K562 (cell line): ENCODE measurements at regions of chr2 and their contacts with region 1.

Region 1: GRCh38 chr2:206800506-206801417 is 35.4 kb downstream of the FASTKD2 start:
- DNase-seq: peak; percentile 26 to 61 (median 28)
- ATAC-seq: peak; percentile 80
- H3K4me3 ChIP-seq: no peak overlapping the region
- H3K27ac ChIP-seq: no peak overlapping the region
- H3K4me1 ChIP-seq: no peaks in the 10 kb centered on the region
- H3K27me3 ChIP-seq: no peaks in the 10 kb centered on the region
- CTCF ChIP-seq: peak; percentile 51 to 72 (median 57)
- EP300 ChIP-seq: no peak
- POLR2A ChIP-seq: no peak
- RAD21 ChIP-seq: peak; percentile 66 to 67

Region 2: GRCh38 chr2:206543073-206543472 is 257.7 kb before region 1 on chr2:
- CTCF ChIA-PET with region 1: no interaction called
- POLR2A ChIA-PET with region 1: no interaction called
- in situ Hi-C with region 1: no loop called
- intact Hi-C with region 1: no loop called
- DNase-seq: no peak
- ATAC-seq: no peak
- H3K4me3 ChIP-seq: no peak overlapping the region
- H3K27ac ChIP-seq: no peak overlapping the region
- H3K4me1 ChIP-seq: no peaks in the 10 kb centered on the region
- H3K27me3 ChIP-seq: no peaks in the 10 kb centered on the region; a peak in 1 of 5 replicates
- CTCF ChIP-seq: no peak
- EP300 ChIP-seq: no peak
- POLR2A ChIP-seq: no peak
- RAD21 ChIP-seq: no peak

Region 3: DNA sequence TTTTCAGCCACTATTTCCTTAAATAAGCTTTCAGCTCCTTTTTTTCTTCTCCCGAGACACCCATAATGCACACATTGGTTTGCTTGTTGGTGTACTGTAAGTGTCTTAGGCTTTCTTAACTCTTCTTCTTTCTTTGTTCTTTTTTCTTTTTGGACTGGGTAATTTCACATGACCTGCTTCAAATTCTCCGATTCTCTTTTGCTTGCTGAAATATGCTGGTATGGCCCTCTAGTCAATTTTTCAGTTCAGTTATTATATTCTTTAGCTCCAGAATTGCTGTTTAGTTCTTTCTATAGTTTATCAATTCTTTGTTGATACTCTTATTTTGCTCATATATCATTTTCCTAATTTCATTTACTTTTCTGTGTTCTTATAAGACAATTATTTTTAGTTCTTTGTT is 20.1 kb before region 1 on chr2:
- CTCF ChIA-PET with region 1: no interaction called
- POLR2A ChIA-PET with region 1: no interaction called
- in situ Hi-C with region 1: no loop called
- intact Hi-C with region 1: no loop called
- DNase-seq: no peak
- ATAC-seq: no peak
- H3K4me3 ChIP-seq: no peak overlapping the region
- H3K27ac ChIP-seq: no peak overlapping the region
- H3K4me1 ChIP-seq: no peaks in the 10 kb centered on the region
- H3K27me3 ChIP-seq: no peaks in the 10 kb centered on the region
- CTCF ChIP-seq: no peak
- EP300 ChIP-seq: no peak
- POLR2A ChIP-seq: no peak
- RAD21 ChIP-seq: no peak

Region 4: DNA sequence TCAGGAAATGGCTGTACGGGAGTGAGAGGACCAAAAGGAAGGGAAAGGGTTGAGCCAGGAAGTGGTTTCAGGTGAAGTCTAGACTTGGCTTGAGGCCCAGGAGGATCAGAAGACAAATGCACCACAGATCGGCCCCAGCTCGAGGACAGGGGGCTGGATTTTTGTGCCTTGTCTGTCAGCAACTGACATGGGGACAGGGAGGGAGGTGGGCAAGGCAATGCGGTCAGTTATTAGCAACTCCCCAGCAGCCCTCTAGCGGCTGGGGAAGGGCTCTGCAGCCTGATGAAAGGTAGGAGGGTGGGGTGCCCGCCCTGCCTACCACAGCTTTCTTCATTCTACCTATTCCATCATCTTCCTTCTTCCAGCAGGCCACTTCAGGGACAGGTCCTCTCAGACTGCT is 188.5 kb after region 1 on chr2:
- CTCF ChIA-PET with region 1: no interaction called
- POLR2A ChIA-PET with region 1: no interaction called
- in situ Hi-C with region 1: no loop called
- intact Hi-C with region 1: loop called (anchors 5 kb)
- DNase-seq: peak; percentile 37 to 48 (median 44)
- ATAC-seq: peak; percentile 94
- H3K4me3 ChIP-seq: no peak overlapping the region
- H3K27ac ChIP-seq: no peak overlapping the region
- H3K4me1 ChIP-seq: no peaks in the 10 kb centered on the region
- H3K27me3 ChIP-seq: no peaks in the 10 kb centered on the region
- CTCF ChIP-seq: peak; percentile 56 to 70 (median 59)
- EP300 ChIP-seq: no peak
- POLR2A ChIP-seq: no peak
- RAD21 ChIP-seq: peak in 1 of 2 experiments; percentile 50; a peak in 2 of 4 replicates

Region 5: GRCh38 chr2:207341804-207342203 is 541.0 kb after region 1 on chr2:
- CTCF ChIA-PET with region 1: no interaction called
- POLR2A ChIA-PET with region 1: no interaction called
- in situ Hi-C with region 1: no loop called
- intact Hi-C with region 1: loop called (anchors 1 kb)
- DNase-seq: peak in 1 of 4 experiments; percentile 14
- ATAC-seq: peak; percentile 64; the same call in 1 of the 3 replicates
- H3K4me3 ChIP-seq: no peak overlapping the region
- H3K27ac ChIP-seq: no peak overlapping the region
- H3K4me1 ChIP-seq: no peaks in the 10 kb centered on the region; a peak in 2 of 5 replicates
- H3K27me3 ChIP-seq: no peaks in the 10 kb centered on the region
- CTCF ChIP-seq: peak in 1 of 3 experiments; percentile 38; a peak in 2 of 6 replicates
- EP300 ChIP-seq: no peak
- POLR2A ChIP-seq: no peak
- RAD21 ChIP-seq: peak in 1 of 2 experiments; percentile 66; a peak in 3 of 4 replicates

Region 6: DNA sequence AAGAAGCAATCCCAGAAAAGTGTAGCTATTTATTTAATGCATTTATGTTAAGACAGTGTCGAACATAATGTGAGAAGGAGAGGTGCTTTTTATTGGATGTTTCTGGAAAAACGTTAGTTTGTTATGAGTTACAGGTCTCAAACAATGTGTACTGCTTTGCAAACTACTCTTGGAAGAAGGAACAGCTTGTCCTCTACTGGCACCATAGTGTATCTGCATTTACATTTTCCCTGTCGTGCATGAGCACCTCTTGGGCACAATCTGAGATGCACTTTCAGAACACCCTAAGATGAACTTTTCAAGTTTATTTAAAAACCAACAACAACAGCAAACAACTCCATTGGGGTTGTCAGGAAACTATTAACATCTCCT is 933.5 kb after region 1 on chr2:
- CTCF ChIA-PET with region 1: no interaction called
- POLR2A ChIA-PET with region 1: no interaction called
- in situ Hi-C with region 1: no loop called
- intact Hi-C with region 1: loop called (anchors 10 kb)
- DNase-seq: peak in 1 of 4 experiments; percentile 25
- ATAC-seq: peak; percentile 75
- H3K4me3 ChIP-seq: no peak overlapping the region
- H3K27ac ChIP-seq: no peak overlapping the region
- H3K4me1 ChIP-seq: no peaks in the 10 kb centered on the region
- H3K27me3 ChIP-seq: no peaks in the 10 kb centered on the region
- CTCF ChIP-seq: peak; percentile 34 to 60 (median 39); a peak in 5 of 6 replicates
- EP300 ChIP-seq: no peak
- POLR2A ChIP-seq: no peak
- RAD21 ChIP-seq: peak; percentile 63 to 71